ENCODE measurements at regions of chr12 and their contacts with region 1.

Region 1: GRCh38 chr12:104215638-104216297 is at the start of gene TXNRD1:
- DNase-seq: peak; percentile 93
- total RNA-seq, gene TXNRD1: 121 TPM

Region 2: DNA sequence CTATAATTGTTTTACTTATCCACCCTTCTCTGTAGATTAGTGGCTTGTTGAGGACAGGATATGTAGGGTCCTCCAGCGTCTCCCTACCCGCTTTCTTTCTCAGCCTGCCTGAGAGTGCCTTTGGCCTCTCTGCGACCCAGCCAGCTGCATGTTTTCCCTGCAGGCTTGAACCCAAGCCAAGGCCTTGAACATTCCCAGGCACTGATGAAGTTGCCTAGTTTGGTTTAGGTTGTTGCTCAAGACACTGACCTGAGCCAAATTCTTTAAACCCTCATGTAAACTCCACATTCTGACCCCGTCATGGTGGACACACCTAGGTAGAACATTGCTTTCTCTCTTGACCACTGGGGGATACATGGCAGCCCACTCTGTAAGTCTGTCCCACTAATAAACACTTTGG is 33.6 kb before region 1 on chr12:
- intact Hi-C with region 1: loop called (anchors 5 kb)
- DNase-seq: no peak

Region 3: GRCh38 chr12:104286538-104287482 is 71.0 kb after region 1 on chr12:
- intact Hi-C with region 1: loop called (anchors 1 kb)
- DNase-seq: peak; percentile 96

Region 4: GRCh38 chr12:104303538-104304151 is 87.9 kb after region 1 on chr12 and contains the start of gene EID3:
- intact Hi-C with region 1: loop called (anchors 5 kb)
- DNase-seq: peak; percentile 96
- total RNA-seq, gene EID3: 2.1 TPM

Region 5: DNA sequence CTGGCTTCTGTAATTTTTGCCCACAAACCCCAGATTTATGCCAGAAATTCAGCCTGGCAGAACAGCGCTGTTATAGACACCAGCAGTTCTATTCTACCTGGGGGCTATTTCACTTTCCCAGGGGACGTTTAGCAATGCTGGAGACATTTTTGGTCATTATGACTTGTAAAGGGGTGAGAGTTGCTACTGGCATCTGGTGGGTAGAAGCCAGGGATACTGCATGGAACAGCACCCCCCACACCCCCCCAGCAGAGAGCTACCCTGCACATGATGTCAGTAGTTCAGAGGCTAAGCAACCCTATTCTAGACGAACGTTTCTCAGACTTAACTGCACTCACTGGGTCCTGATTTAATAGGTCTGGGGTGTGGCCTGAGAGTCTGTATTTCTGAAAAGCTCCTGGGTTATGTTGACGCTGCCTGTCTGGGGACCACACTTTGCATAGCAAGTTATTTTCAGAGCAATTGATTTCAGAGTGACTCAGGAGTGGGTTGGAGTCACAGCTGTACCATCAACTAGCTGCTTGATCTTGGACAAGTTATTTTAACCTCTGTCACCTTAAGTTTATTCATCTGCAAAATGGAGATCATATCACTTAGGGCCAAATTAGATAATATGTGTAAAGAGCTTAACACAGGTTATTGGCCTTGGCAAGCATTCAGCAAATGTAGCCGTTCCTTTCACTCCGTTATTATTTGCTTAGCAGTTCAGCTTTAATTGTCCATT is 289.5 kb after region 1 on chr12:
- intact Hi-C with region 1: no loop called
- DNase-seq: no peak